Activated CD4-positive, alpha-beta T cell treated with anti-CD3 and anti-CD28 coated beads, Interleukin-2, amount 10 ng/mL, durations not matched to agents 24 days and 14 days (primary cell): ENCODE measurements at regions of chr6 and their contacts with region 1.

Region 1: DNA sequence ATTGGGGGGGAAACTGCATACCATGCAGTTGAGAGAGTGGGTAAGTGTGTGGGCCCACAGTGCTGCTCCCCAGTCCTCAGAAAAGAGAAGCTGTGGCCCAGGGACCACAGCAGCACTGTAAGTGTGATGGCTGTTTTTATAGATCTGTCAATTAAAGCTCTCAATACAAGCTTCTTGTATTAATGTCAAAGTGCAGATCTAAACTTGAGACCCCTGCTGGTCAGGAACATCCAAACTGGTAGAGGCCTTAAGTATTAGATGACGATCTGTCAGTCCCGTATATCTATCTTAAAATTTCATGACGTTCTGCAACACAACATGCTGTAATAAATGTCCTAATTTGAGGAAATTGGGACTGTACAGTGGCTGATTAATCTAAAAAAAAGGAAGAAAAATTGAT is 74.8 kb downstream of the TULP4 start:
- DNase-seq: no peak
- H3K4me3 Mint-ChIP-seq: no peak overlapping the region
- H3K27ac Mint-ChIP-seq: no peak overlapping the region
- H3K4me1 Mint-ChIP-seq: no peaks in the 10 kb centered on the region
- H3K27me3 Mint-ChIP-seq: no peaks in the 10 kb centered on the region

Region 2: DNA sequence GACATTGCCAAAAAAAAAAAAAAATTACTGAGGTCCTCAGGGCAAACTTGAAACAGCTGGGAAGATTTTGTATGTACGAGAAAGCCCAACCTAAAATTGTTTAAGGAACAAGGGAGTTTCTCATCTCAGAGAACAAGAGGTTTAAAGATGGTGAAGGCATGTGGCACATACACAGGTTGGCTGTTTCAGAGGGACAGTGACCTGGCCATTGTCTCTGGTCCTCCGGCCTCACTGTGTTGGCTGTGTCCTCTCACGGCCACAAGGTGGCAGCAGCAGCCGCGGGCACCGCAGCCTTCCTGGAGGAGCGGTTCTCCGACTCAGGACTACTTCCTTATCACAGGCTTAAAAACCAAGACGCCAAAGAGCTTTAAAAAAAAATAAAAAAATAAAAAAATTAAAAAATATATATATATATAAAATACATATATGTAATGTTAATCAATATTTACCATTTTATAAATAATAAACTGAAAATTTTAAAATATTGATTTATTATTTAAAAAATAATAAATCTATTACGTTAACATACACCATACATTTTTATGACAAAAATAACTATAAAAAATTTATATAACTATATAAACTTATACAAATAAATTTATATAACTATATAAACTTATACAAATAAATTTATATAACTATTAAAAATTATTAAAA is 166.1 kb before region 1 on chr6:
- intact Hi-C with region 1: loop called (anchors 5 kb)
- DNase-seq: peak; percentile 93
- H3K4me3 Mint-ChIP-seq: no peak overlapping the region
- H3K27ac Mint-ChIP-seq: no peak overlapping the region
- H3K4me1 Mint-ChIP-seq: peaks cover 2% of the 10 kb centered on the region
- H3K27me3 Mint-ChIP-seq: no peaks in the 10 kb centered on the region